ENCODE measurements at regions of chr3 and their contacts with region 1.

Region 1: GRCh38 chr3:27484015-27484844 is at the start of gene SLC4A7:
- DNase-seq: peak; percentile 98 to 99
- ATAC-seq: peak; percentile 91 to 99 (median 93)
- H3K4me3 ChIP-seq: peak within 1 kb of the TSS; percentile 87
- H3K4me3 Mint-ChIP-seq: peak within 1 kb of the TSS; percentile 100
- H3K27ac ChIP-seq: peak within 1 kb of the TSS; percentile 71
- H3K27ac Mint-ChIP-seq: peak within 1 kb of the TSS; percentile 93 to 96
- H3K4me1 ChIP-seq: peaks cover 39% of the 10 kb centered on the region
- H3K4me1 Mint-ChIP-seq: peaks cover 35 to 38% of the 10 kb centered on the region in 2 donors
- H3K27me3 ChIP-seq: no peaks in the 10 kb centered on the region
- H3K27me3 Mint-ChIP-seq: no peaks in the 10 kb centered on the region
- CTCF ChIP-seq: no peak
- total RNA-seq, gene SLC4A7: 36.4 to 48.0 (median 41.3) TPM

Region 2: DNA sequence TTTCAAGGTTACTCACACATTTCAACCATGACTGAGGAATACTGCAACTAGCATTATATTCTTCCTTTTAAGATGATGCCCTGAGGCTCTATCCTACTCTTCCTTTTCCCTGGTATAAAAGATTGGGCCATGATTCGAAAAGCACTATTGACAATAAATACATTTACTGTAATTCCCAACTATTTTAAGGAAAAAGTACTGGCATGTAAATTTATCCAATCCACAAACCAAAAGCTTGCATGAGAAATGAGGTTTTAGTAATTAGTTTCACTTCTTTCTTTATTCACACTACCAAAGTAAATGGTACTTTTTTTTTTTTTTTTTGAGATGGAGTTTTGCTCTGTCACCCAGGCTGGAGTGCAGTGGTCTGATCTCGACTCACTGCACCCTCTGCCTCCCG is 551.5 kb before region 1 on chr3:
- intact Hi-C with region 1: no loop called
- DNase-seq: no peak
- ATAC-seq: no peak
- H3K4me3 ChIP-seq: no peak overlapping the region
- H3K4me3 Mint-ChIP-seq: no peak overlapping the region
- H3K27ac ChIP-seq: no peak overlapping the region
- H3K27ac Mint-ChIP-seq: no peak overlapping the region
- H3K4me1 ChIP-seq: no peaks in the 10 kb centered on the region
- H3K4me1 Mint-ChIP-seq: no peaks in the 10 kb centered on the region
- H3K27me3 ChIP-seq: no peaks in the 10 kb centered on the region
- H3K27me3 Mint-ChIP-seq: no peaks in the 10 kb centered on the region
- CTCF ChIP-seq: no peak

Region 3: DNA sequence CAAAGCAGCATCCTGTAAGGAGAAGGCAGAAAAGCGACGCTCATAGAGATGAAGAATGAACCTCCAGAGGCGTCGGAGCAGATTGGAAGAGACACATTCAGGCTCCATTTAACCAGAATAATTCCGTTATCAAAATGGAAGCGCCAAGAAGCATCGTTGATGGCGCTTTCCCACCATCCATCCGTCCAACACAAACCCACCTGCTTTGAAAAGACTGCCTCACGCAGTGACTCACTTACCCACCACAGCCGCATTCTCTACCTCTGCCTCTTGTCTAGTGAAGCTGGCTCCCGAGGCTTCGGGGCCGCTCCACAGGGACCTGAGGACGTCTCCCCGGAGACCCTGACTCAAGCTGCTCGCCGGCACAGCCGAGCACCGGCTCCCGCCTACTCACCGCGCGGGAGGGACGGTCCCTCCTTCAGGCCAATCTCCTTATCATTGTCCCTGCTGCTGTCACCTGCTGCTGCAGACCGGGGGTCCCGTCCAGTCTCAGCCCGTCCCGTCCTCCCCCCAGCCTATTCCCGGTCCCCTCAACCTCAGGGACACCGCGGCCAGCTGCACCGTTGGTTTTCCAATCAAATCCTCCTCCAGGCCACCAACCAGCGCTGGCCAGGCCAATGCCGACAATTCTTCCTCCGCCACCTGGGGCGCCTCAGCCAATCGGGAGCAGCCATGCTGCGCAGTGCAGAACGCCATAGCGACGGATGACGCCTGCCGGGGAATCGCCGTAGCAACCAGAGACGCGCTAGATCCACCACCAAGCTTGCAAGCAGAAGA is 115.2 kb before region 1 on chr3 and contains the start of gene NEK10:
- intact Hi-C with region 1: loop called (anchors 5 kb)
- DNase-seq: peak; percentile 89 to 95
- ATAC-seq: peak; percentile 97 to 100 (median 99)
- H3K4me3 ChIP-seq: peak within 1 kb of the TSS; percentile 60
- H3K4me3 Mint-ChIP-seq: peak within 1 kb of the TSS; percentile 96
- H3K27ac ChIP-seq: no peak within 1 kb of the TSS
- H3K27ac Mint-ChIP-seq: peak within 1 kb of the TSS; percentile 55 to 79
- H3K4me1 ChIP-seq: peaks cover 8% of the 10 kb centered on the region
- H3K4me1 Mint-ChIP-seq: peaks cover 17 to 21% of the 10 kb centered on the region in 2 donors
- H3K27me3 ChIP-seq: no peaks in the 10 kb centered on the region
- H3K27me3 Mint-ChIP-seq: no peaks in the 10 kb centered on the region
- CTCF ChIP-seq: no peak
- total RNA-seq, gene NEK10: 0.68 to 1.6 (median 0.80) TPM

Region 4: DNA sequence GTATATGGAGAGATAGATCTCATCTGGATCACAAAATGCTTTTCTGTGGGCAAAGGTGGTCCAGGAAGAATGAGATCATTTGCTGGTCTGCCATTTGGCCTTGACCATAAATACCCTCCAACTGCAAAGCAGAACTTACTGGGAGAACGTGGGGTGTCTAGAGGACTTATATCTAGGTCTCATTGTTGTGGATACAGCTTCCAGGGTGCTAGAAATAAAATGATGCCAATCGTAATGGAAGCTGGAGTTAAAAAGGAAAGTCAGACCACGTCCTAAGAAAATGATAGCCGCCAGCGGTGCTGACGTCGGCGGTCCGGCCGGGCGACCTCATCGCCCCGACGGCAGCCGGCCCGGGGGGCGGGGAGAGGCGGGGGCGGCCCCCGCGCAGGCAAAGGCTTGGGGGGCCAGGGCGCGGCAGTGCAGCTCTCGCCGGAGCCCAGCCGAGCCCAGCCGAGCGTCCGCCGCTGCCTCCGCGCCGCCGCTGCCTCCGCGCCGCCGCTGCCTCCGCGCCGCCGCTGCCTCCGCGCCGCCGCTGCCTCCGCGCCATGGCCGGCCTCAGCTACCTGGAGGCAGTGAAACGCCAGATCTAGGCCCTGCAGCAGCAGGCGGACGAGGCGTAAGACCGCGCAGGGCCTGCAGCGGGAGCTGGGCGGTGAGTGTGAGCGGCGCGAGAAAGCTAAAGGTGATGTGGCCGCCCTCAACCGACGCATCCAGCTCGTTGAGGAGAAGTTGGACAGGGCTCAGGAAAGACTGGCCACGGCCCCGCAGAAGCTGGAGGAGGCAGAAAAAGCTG is 148.4 kb after region 1 on chr3:
- intact Hi-C with region 1: loop called (anchors 10 kb)
- DNase-seq: peak; percentile 43 to 70
- ATAC-seq: peak; percentile 83 to 86 (median 85)
- H3K4me3 ChIP-seq: peak overlapping the region; percentile 66
- H3K4me3 Mint-ChIP-seq: peak overlapping the region; percentile 92
- H3K27ac ChIP-seq: peak overlapping the region; percentile 89
- H3K27ac Mint-ChIP-seq: peak overlapping the region; percentile 86 to 97
- H3K4me1 ChIP-seq: peaks cover 6% of the 10 kb centered on the region
- H3K4me1 Mint-ChIP-seq: peaks cover 21 to 27% of the 10 kb centered on the region in 2 donors
- H3K27me3 ChIP-seq: no peaks in the 10 kb centered on the region
- H3K27me3 Mint-ChIP-seq: no peaks in the 10 kb centered on the region
- CTCF ChIP-seq: no peak